A673 (cell line): ENCODE measurements at regions of chr17 and their contacts with region 1.

Region 1: GRCh38 chr17:143782-144281 is 6.5 kb downstream of the SCGB1C2 start:
- DNase-seq: peak; percentile 81
- H3K4me3 ChIP-seq: no peak overlapping the region
- H3K27ac ChIP-seq: no peak overlapping the region
- H3K4me1 ChIP-seq: no peaks in the 10 kb centered on the region
- H3K27me3 ChIP-seq: no peaks in the 10 kb centered on the region
- CTCF ChIP-seq: peak; percentile 80

Region 2: GRCh38 chr17:233473-233941 is 89.7 kb after region 1 on chr17:
- CTCF ChIA-PET with region 1: no interaction called
- POLR2A ChIA-PET with region 1: no interaction called
- intact Hi-C with region 1: no loop called
- DNase-seq: no peak
- H3K4me3 ChIP-seq: no peak overlapping the region
- H3K27ac ChIP-seq: no peak overlapping the region
- H3K4me1 ChIP-seq: peaks cover 3% of the 10 kb centered on the region
- H3K27me3 ChIP-seq: no peaks in the 10 kb centered on the region
- CTCF ChIP-seq: no peak

Region 3: DNA sequence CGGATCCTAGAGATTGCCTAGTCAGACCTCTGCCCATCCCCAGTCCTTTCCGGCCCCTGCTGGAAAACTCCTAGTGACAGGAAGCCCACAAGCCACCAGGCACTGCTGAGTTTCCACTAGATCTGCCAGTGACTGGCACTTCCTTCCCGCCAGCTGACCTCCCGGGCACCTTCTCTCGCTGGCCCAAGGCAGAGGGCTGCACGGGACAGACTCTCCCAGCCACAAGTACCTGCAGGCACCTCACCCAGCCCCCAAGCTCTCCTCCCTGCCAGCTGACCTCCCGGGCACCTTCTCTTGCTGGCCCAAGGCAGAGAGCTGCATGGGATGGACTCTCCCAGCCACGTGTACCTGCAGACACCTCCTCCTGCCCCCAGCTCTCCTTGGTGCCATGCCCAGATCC is 103.9 kb after region 1 on chr17:
- CTCF ChIA-PET with region 1: no interaction called
- POLR2A ChIA-PET with region 1: no interaction called
- intact Hi-C with region 1: no loop called
- DNase-seq: no peak
- H3K4me3 ChIP-seq: no peak overlapping the region
- H3K27ac ChIP-seq: no peak overlapping the region
- H3K4me1 ChIP-seq: no peaks in the 10 kb centered on the region
- H3K27me3 ChIP-seq: no peaks in the 10 kb centered on the region
- CTCF ChIP-seq: no peak

Region 4: GRCh38 chr17:385926-386876 is 242.4 kb after region 1 on chr17:
- CTCF ChIA-PET with region 1: no interaction called
- POLR2A ChIA-PET with region 1: no interaction called
- intact Hi-C with region 1: loop called (anchors 5 kb)
- DNase-seq: peak; percentile 50
- H3K4me3 ChIP-seq: peak overlapping the region; percentile 42
- H3K27ac ChIP-seq: no peak overlapping the region
- H3K4me1 ChIP-seq: peaks cover 3% of the 10 kb centered on the region
- H3K27me3 ChIP-seq: no peaks in the 10 kb centered on the region
- CTCF ChIP-seq: peak; percentile 44; the same call in 1 of the 2 replicates